ENCODE measurements at regions of chr19 and their contacts with region 1.

Region 1: GRCh38 chr19:34712395-34713261 is 21.4 kb upstream of the ZNF181 start:
- DNase-seq: peak in 2 of 5 donors; percentile 23 to 42
- H3K4me3 ChIP-seq: no peak overlapping the region
- H3K27ac ChIP-seq: no peak overlapping the region
- H3K4me1 ChIP-seq: no peaks in the 10 kb centered on the region
- H3K27me3 ChIP-seq: no peaks in the 10 kb centered on the region
- CTCF ChIP-seq: peak; percentile 41 to 69 (median 57)
- EP300 ChIP-seq: no peak
- POLR2A ChIP-seq: no peak

Region 2: DNA sequence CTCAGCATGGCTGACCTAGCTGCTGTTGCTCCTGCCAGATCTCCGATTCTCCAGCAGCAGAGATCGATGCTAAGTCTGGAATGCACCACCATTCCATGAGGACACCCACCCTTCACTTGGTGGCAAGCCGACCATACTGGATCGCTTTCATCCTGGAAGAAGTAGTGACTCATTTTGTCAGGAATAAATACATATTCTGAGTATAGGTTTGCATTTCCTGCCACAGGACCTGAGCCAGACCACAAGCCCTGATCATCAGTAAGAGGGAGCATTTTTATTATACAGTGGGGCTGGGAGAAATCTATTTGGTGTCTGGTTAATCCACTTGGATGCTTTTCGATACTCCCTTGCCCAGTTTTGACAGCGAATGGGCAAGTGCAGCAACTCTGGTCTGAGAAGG is 926.8 kb before region 1 on chr19:
- intact Hi-C with region 1: loop called in 1 of 4 experiments (anchors 10 kb)
- DNase-seq: no peak
- H3K4me3 ChIP-seq: no peak overlapping the region
- H3K27ac ChIP-seq: no peak overlapping the region
- H3K4me1 ChIP-seq: peaks cover under 1% of the 10 kb centered on the region
- H3K27me3 ChIP-seq: no peaks in the 10 kb centered on the region
- CTCF ChIP-seq: no peak
- EP300 ChIP-seq: no peak
- POLR2A ChIP-seq: no peak

Region 3: GRCh38 chr19:34501339-34502320 is 211.0 kb before region 1 on chr19:
- intact Hi-C with region 1: loop called in 1 of 4 experiments (anchors 10 kb)
- DNase-seq: peak; percentile 88 to 95 (median 93)
- H3K4me3 ChIP-seq: no peak overlapping the region
- H3K27ac ChIP-seq: no peak overlapping the region
- H3K4me1 ChIP-seq: peaks cover 2% of the 10 kb centered on the region
- H3K27me3 ChIP-seq: no peaks in the 10 kb centered on the region
- CTCF ChIP-seq: peak; percentile 95 to 98 (median 97)
- EP300 ChIP-seq: no peak
- POLR2A ChIP-seq: no peak

Region 4: GRCh38 chr19:34639491-34640085 is 73.0 kb before region 1 on chr19:
- intact Hi-C with region 1: loop called in 1 of 4 experiments (anchors 5 kb)
- DNase-seq: peak in 1 of 5 donors; percentile 47
- H3K4me3 ChIP-seq: no peak overlapping the region
- H3K27ac ChIP-seq: no peak overlapping the region
- H3K4me1 ChIP-seq: no peaks in the 10 kb centered on the region
- H3K27me3 ChIP-seq: no peaks in the 10 kb centered on the region
- CTCF ChIP-seq: peak; percentile 14 to 47 (median 46)
- EP300 ChIP-seq: no peak
- POLR2A ChIP-seq: no peak

Region 5: DNA sequence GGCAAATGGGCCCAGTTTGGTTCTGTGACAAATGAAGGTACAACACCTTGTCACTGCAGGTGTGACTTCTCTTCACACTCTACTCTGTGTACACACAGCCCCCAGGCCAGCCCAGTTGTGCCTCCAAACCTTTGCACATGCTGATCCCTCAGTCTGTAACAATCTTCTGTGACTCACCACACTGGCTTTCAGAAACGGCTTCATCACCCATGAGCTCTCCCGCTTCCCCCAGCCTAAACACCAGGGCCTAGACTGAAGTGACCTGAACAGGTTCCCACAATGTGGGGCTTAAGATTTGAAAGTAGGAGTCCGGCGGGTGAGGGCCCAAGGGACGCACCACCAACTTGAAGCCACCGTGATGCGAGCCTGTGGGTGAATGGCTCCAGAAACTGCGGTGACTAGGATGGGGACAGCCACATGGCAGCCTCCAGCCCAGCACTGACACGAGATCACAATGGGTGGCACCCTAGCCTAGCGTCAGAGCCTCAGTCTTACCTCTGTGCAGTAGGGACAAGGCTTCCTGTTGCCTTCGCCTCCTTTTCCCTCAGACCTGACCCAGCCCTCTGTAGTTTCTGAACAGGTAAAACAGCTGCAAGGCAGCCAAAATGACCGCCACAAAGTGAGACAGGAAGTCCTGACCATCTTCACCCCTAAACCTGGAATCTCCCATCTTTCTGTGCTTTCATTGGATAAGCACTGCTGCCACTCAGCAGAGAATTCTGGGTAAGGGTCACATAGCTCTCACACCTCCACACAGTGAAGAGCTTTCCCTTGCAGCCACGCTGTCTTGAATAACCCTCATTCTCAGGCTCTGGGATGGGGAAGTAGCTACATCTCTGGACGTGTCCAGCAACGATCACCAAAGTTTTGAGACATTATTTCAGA is 94.6 kb after region 1 on chr19:
- intact Hi-C with region 1: no loop called
- DNase-seq: no peak
- H3K4me3 ChIP-seq: no peak overlapping the region
- H3K27ac ChIP-seq: no peak overlapping the region
- H3K4me1 ChIP-seq: no peaks in the 10 kb centered on the region
- H3K27me3 ChIP-seq: no peaks in the 10 kb centered on the region
- CTCF ChIP-seq: no peak
- EP300 ChIP-seq: no peak
- POLR2A ChIP-seq: no peak